Calu3 (cell line): ENCODE measurements at regions of chr12 and their contacts with region 1.

Region 1: GRCh38 chr12:79737875-79738718 is 47.3 kb upstream of the PAWR start:
- DNase-seq: peak; percentile 67
- H3K4me3 Mint-ChIP-seq: no peak overlapping the region
- H3K27ac Mint-ChIP-seq: no peak overlapping the region
- H3K4me1 Mint-ChIP-seq: no peaks in the 10 kb centered on the region
- H3K27me3 Mint-ChIP-seq: no peaks in the 10 kb centered on the region
- CTCF ChIP-seq: peak; percentile 40

Region 2: GRCh38 chr12:79366378-79366777 is 371.7 kb before region 1 on chr12:
- CTCF ChIA-PET with region 1: no interaction called
- intact Hi-C with region 1: no loop called
- DNase-seq: no peak
- H3K4me3 Mint-ChIP-seq: no peak overlapping the region
- H3K27ac Mint-ChIP-seq: no peak overlapping the region
- H3K4me1 Mint-ChIP-seq: peaks cover 8% of the 10 kb centered on the region
- H3K27me3 Mint-ChIP-seq: no peaks in the 10 kb centered on the region
- CTCF ChIP-seq: no peak

Region 3: DNA sequence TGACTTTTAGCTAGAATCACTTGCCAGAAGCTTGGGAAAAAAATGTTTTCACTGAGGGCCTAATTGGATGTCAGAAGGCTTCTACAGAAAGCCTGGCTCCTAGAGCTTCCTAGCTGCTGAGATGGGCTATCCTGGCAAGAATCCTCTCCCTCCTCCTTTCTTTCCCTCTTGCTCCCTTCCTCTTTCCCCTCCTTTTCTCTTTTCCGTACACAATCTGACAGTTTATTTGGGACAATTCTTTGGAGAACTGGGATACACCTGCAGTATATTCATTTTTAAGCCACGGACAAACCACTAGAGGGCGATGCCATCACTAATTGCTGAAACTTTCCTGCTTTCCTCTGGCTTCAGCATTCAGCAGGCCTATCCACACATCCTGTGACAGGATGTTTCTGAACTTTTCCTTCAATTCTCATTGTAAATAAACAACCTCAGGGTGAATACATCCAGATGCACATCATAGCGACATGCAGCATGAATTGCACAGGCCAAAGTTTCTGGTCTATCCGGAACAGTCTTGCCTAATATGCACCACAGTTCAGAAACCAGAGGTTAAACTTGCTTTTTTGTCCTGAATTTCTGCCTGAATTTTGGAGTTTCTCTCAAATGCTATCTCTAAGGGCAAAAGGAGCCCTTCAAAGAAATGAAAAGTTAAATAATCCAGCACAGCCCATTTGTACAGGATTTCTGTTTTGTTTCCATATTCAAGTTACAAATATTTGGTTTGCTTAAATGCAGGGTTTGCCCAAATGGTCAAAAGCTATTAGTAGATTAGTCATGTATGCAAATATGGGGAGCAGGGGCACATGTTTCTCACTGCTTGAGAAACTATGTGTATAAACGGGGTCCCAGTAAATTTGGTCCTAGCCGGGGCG is 190.1 kb before region 1 on chr12:
- CTCF ChIA-PET with region 1: interaction called, 3 read pairs
- intact Hi-C with region 1: loop called (anchors 2 kb)
- DNase-seq: peak; percentile 71
- H3K4me3 Mint-ChIP-seq: peak overlapping the region; percentile 7
- H3K27ac Mint-ChIP-seq: peak overlapping the region; percentile 83
- H3K4me1 Mint-ChIP-seq: peaks cover 88% of the 10 kb centered on the region
- H3K27me3 Mint-ChIP-seq: no peaks in the 10 kb centered on the region
- CTCF ChIP-seq: peak; percentile 71

Region 4: GRCh38 chr12:79555028-79555930 is 182.8 kb before region 1 on chr12:
- CTCF ChIA-PET with region 1: no interaction called
- intact Hi-C with region 1: loop called (anchors 1 kb)
- DNase-seq: peak; percentile 44
- H3K4me3 Mint-ChIP-seq: no peak overlapping the region
- H3K27ac Mint-ChIP-seq: peak overlapping the region; percentile 59
- H3K4me1 Mint-ChIP-seq: peaks cover 61% of the 10 kb centered on the region
- H3K27me3 Mint-ChIP-seq: no peaks in the 10 kb centered on the region
- CTCF ChIP-seq: peak; percentile 61

Region 5: DNA sequence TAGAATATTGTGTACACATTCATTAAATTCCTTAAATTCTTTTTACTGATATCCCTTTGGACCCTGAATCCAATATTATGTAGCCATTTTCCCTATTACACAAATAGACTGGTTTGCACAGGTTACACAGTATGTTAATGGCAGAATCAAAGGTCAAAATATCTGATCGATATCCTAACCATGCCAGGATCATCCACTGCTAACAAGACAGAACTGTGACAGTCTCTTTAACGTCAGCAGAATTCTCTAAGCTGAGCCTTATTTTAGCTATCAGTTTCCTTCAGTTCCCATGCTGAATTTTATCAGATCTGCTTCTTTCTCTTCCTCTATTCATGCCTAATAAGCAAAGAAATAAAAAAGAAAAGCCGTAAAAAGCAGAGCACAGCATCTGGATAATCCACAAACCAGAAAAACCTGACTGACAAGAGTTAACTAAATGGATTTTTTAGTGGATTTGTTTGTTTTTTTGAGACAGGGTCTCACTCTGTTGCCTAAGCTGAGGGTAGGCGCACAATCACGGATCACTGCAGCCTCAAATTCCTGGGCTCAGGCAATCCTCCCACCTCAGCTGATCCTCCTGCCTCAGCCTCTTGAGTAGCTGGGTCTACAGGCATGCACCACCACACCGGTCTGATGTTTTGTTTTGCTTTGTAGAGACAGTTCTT is 177.7 kb before region 1 on chr12:
- CTCF ChIA-PET with region 1: no interaction called
- intact Hi-C with region 1: loop called (anchors 1 kb)
- DNase-seq: peak; percentile 21
- H3K4me3 Mint-ChIP-seq: no peak overlapping the region
- H3K27ac Mint-ChIP-seq: peak overlapping the region; percentile 86
- H3K4me1 Mint-ChIP-seq: peaks cover 49% of the 10 kb centered on the region
- H3K27me3 Mint-ChIP-seq: no peaks in the 10 kb centered on the region
- CTCF ChIP-seq: no peak

Region 6: GRCh38 chr12:79690638-79691493 is 47.2 kb before region 1 on chr12 and contains the start of gene PAWR:
- CTCF ChIA-PET with region 1: interaction called, 7 read pairs
- intact Hi-C with region 1: loop called (anchors 1 kb)
- DNase-seq: peak; percentile 92
- H3K4me3 Mint-ChIP-seq: peak within 1 kb of the TSS; percentile 75
- H3K27ac Mint-ChIP-seq: peak within 1 kb of the TSS; percentile 93
- H3K4me1 Mint-ChIP-seq: peaks cover 39% of the 10 kb centered on the region
- H3K27me3 Mint-ChIP-seq: no peaks in the 10 kb centered on the region
- CTCF ChIP-seq: no peak
- total RNA-seq, gene PAWR: 172 and 204 TPM in 2 replicates